ENCODE measurements at regions of chr5 and their contacts with region 1.

Region 1: DNA sequence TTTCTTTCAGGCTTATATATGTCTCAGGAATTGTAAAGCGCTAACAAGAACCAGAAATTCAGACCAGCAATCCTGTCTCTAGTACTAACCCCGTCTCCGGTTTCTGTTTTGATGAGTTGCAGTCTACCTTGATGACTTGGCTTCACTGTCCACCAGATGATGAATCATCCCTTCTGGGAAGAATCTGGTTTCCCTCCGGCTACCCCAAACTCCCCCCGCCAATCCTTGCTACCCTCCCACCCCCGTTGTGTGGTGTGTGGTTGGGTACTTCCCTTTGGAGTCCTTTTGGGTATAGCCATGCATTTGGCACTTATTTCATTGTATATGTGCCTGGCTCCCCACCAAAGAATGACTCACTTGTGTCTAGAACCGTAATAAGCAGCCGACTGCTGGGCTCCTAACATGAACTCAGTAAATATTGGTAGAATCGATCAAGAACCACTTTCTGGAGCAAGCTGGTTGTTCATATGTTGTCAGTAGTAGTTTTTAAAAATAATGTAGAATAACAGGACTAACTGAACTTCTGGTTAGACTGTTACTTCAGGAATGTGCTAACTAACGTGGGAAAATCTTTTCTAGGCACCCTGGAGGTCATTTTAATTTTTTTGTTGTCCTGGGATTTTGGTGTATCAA is 8.3 kb upstream of the TGFBI start:
- DNase-seq: peak; percentile 98
- H3K4me3 ChIP-seq: no peak overlapping the region
- CTCF ChIP-seq: no peak

Region 2: GRCh38 chr5:135977375-135977928 is 43.0 kb before region 1 on chr5:
- in situ Hi-C with region 1: loop called (anchors 5 kb)
- DNase-seq: no peak
- H3K4me3 ChIP-seq: no peak overlapping the region
- CTCF ChIP-seq: peak; percentile 62

Region 3: GRCh38 chr5:136066661-136067271 is 46.3 kb after region 1 on chr5:
- in situ Hi-C with region 1: loop called (anchors 5 kb)
- DNase-seq: no peak
- H3K4me3 ChIP-seq: no peak overlapping the region
- CTCF ChIP-seq: peak; percentile 23

Region 4: GRCh38 chr5:136109453-136110133 is 89.1 kb after region 1 on chr5:
- in situ Hi-C with region 1: no loop called
- DNase-seq: no peak
- H3K4me3 ChIP-seq: no peak overlapping the region
- CTCF ChIP-seq: no peak

Measured in astrocyte of the cerebellum (primary cell).